Calu3 (cell line): ENCODE measurements at regions of chr3 and their contacts with region 1.

Region 1: DNA sequence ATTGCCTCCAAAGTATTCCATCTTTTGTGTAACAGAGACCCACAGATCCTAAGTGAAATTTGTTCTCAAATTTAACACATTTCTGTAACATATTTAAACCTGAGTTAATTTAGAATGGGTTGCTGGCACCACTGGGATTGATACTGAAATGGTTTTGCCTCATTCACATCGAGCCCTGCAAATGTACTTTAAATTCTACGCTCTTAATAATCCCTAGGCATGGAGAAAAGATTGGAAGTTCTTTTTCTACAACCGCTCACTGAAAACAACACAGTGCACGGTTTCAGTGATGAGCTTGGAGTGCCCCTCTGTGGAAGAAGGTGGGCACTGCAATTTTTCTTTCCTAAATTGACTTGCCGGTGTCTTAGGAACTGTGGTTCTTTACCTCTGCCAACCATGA is 109.9 kb upstream of the ATP11B start:
- DNase-seq: peak; percentile 88
- H3K4me3 Mint-ChIP-seq: peak overlapping the region; percentile 66
- H3K27ac Mint-ChIP-seq: peak overlapping the region; percentile 62
- H3K4me1 Mint-ChIP-seq: peaks cover 17% of the 10 kb centered on the region
- H3K27me3 Mint-ChIP-seq: no peaks in the 10 kb centered on the region
- CTCF ChIP-seq: peak; percentile 96

Region 2: DNA sequence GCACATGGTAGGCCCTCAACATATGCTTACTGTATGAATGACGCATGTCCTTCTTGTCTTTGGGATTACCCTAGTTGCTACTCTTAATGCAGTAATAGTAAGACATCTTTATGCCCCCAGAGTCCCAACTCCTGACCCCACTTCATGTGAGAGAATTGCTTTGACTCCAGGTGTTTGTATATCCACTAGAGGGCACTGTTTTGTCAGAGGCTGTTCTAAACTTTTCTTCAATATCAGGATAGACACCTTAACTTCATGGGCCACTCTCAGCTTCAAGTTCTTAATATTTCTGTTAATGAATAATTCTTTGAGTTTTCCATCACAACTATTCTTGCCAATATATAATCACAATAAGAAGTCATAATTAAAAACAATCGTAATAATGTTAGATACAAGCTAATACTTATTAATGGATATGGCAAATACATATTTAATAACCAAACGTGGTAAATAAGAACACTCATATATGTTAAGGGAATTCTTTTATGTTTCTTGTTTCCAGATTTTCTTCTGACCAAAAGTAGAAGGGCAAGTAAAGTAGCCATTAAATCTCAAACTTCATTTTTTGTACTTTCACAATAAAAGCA is 1356.7 kb before region 1 on chr3:
- CTCF ChIA-PET with region 1: interaction called, 4 read pairs
- intact Hi-C with region 1: loop called (anchors 5 kb)
- DNase-seq: peak; percentile 30
- H3K4me3 Mint-ChIP-seq: no peak overlapping the region
- H3K27ac Mint-ChIP-seq: no peak overlapping the region
- H3K4me1 Mint-ChIP-seq: peaks cover 18% of the 10 kb centered on the region
- H3K27me3 Mint-ChIP-seq: no peaks in the 10 kb centered on the region
- CTCF ChIP-seq: peak; percentile 82

Region 3: DNA sequence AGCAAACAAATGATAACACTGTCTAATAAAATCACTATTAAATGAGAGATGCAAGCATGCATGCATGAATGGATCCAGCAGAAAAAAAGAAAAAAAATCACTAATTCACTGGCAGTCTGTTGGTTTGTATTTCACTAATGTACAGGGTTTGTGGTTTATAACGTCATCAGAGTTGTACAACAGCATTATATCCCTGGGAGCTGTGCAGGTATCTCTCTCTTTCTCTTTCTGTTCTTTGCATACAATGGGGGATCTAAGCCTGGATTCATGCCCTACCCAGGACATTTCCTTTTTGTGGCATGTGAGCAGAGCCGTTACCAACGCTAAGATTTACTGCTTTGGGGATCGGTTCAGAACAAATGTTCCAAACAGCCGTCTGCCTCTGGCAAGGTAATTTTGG is 742.2 kb before region 1 on chr3:
- CTCF ChIA-PET with region 1: no interaction called
- intact Hi-C with region 1: loop called (anchors 10 kb)
- DNase-seq: no peak
- H3K4me3 Mint-ChIP-seq: no peak overlapping the region
- H3K27ac Mint-ChIP-seq: no peak overlapping the region
- H3K4me1 Mint-ChIP-seq: no peaks in the 10 kb centered on the region
- H3K27me3 Mint-ChIP-seq: no peaks in the 10 kb centered on the region
- CTCF ChIP-seq: no peak

Region 4: GRCh38 chr3:182258538-182259177 is 424.8 kb before region 1 on chr3:
- CTCF ChIA-PET with region 1: no interaction called
- intact Hi-C with region 1: loop called (anchors 1 kb)
- DNase-seq: peak; percentile 50
- H3K4me3 Mint-ChIP-seq: no peak overlapping the region
- H3K27ac Mint-ChIP-seq: no peak overlapping the region
- H3K4me1 Mint-ChIP-seq: peaks cover 17% of the 10 kb centered on the region
- H3K27me3 Mint-ChIP-seq: no peaks in the 10 kb centered on the region
- CTCF ChIP-seq: peak; percentile 62

Region 5: GRCh38 chr3:182490596-182491491 is 192.6 kb before region 1 on chr3:
- CTCF ChIA-PET with region 1: no interaction called
- intact Hi-C with region 1: loop called (anchors 5 kb)
- DNase-seq: peak; percentile 54
- H3K4me3 Mint-ChIP-seq: no peak overlapping the region
- H3K27ac Mint-ChIP-seq: no peak overlapping the region
- H3K4me1 Mint-ChIP-seq: peaks cover 24% of the 10 kb centered on the region
- H3K27me3 Mint-ChIP-seq: no peaks in the 10 kb centered on the region
- CTCF ChIP-seq: peak; percentile 70

Region 6: GRCh38 chr3:182626484-182627467 is 56.7 kb before region 1 on chr3:
- CTCF ChIA-PET with region 1: interaction called, 10 read pairs
- intact Hi-C with region 1: loop called (anchors 1 kb)
- DNase-seq: peak; percentile 34
- H3K4me3 Mint-ChIP-seq: no peak overlapping the region
- H3K27ac Mint-ChIP-seq: peak overlapping the region; percentile 61
- H3K4me1 Mint-ChIP-seq: peaks cover 28% of the 10 kb centered on the region
- H3K27me3 Mint-ChIP-seq: no peaks in the 10 kb centered on the region
- CTCF ChIP-seq: no peak

Region 7: GRCh38 chr3:182650568-182651128 is 32.8 kb before region 1 on chr3:
- CTCF ChIA-PET with region 1: no interaction called
- intact Hi-C with region 1: no loop called
- DNase-seq: no peak
- H3K4me3 Mint-ChIP-seq: no peak overlapping the region
- H3K27ac Mint-ChIP-seq: no peak overlapping the region
- H3K4me1 Mint-ChIP-seq: no peaks in the 10 kb centered on the region
- H3K27me3 Mint-ChIP-seq: no peaks in the 10 kb centered on the region
- CTCF ChIP-seq: no peak

Region 8: GRCh38 chr3:182704926-182705325 is 21.5 kb after region 1 on chr3:
- CTCF ChIA-PET with region 1: no interaction called
- intact Hi-C with region 1: no loop called
- DNase-seq: peak; percentile 45
- H3K4me3 Mint-ChIP-seq: no peak overlapping the region
- H3K27ac Mint-ChIP-seq: no peak overlapping the region
- H3K4me1 Mint-ChIP-seq: peaks cover 7% of the 10 kb centered on the region
- H3K27me3 Mint-ChIP-seq: no peaks in the 10 kb centered on the region
- CTCF ChIP-seq: peak; percentile 29